ENCODE measurements at regions of chr12 and their contacts with region 1.

Region 1: GRCh38 chr12:114611145-114612018 is 72.6 kb downstream of the TBX3 start:
- DNase-seq: peak; percentile 75 to 82
- H3K4me3 ChIP-seq: no peak overlapping the region
- H3K4me3 Mint-ChIP-seq: peak overlapping the region; percentile 19
- H3K27ac Mint-ChIP-seq: peak overlapping the region; percentile 27
- H3K4me1 ChIP-seq: peaks cover 20% of the 10 kb centered on the region
- H3K4me1 Mint-ChIP-seq: peaks cover 11% of the 10 kb centered on the region
- H3K27me3 ChIP-seq: no peaks in the 10 kb centered on the region
- H3K27me3 Mint-ChIP-seq: no peaks in the 10 kb centered on the region
- CTCF ChIP-seq: no peak

Region 2: DNA sequence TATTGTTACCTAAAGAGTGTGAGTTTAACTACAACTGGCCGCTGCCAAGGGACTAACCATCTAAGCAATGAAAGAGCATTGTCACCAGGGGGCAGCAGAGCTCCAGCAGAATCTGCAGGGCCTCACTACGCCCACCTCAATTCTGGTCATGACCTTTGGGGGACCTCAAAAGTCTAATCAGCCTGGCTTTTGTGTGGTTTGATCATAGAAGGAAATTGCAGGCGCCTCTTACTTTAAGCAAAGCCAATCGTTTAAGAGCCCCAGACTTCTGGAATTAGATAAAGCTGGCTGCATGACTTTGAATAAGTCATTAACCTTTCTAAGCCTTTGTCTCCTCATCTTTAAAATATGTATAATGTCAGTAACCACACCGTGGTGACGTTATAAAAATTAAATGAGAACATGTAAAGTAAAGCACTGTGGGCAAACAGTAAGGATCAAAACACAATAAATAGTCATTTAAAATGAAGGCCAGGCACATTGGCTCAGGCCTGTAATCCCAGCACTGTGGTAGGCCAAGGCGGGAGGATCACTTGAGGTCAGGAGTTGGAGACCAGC is 14.0 kb after region 1 on chr12:
- CTCF ChIA-PET with region 1: interaction called, 16 read pairs
- POLR2A ChIA-PET with region 1: interaction called, 6 read pairs
- intact Hi-C with region 1: no loop called
- DNase-seq: peak; percentile 76 to 81
- H3K4me3 ChIP-seq: no peak overlapping the region
- H3K4me3 Mint-ChIP-seq: no peak overlapping the region
- H3K27ac Mint-ChIP-seq: peak overlapping the region; percentile 61
- H3K4me1 ChIP-seq: peaks cover 30% of the 10 kb centered on the region
- H3K4me1 Mint-ChIP-seq: peaks cover 44% of the 10 kb centered on the region
- H3K27me3 ChIP-seq: no peaks in the 10 kb centered on the region
- H3K27me3 Mint-ChIP-seq: no peaks in the 10 kb centered on the region
- CTCF ChIP-seq: peak; percentile 80 to 84

Region 3: DNA sequence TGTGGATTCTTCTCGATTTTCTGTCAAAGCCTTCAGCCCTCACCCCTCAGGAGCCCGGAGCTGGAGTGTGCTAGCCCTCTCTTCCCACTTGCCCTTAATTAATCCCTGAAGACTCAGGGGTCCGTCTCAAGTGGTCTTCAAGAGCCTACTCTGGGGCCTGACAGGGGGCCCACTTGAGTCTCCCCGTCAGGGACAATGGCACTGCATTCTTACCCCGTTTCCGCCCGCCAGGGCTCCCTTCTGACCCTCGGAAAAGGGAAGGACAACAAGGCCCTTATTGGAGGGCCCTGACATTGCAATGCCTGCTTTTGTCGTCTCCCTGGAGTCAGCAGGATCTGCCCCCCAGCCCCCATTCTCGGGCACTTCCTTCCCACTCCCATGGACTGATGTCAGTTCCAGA is 38.2 kb after region 1 on chr12:
- CTCF ChIA-PET with region 1: no interaction called
- POLR2A ChIA-PET with region 1: no interaction called
- intact Hi-C with region 1: no loop called
- DNase-seq: no peak
- H3K4me3 ChIP-seq: no peak overlapping the region
- H3K4me3 Mint-ChIP-seq: no peak overlapping the region
- H3K27ac Mint-ChIP-seq: no peak overlapping the region
- H3K4me1 ChIP-seq: no peaks in the 10 kb centered on the region
- H3K4me1 Mint-ChIP-seq: no peaks in the 10 kb centered on the region
- H3K27me3 ChIP-seq: no peaks in the 10 kb centered on the region
- H3K27me3 Mint-ChIP-seq: no peaks in the 10 kb centered on the region
- CTCF ChIP-seq: no peak

Region 4: GRCh38 chr12:114918535-114919233 is 307.3 kb after region 1 on chr12:
- CTCF ChIA-PET with region 1: interaction called, 11 read pairs
- POLR2A ChIA-PET with region 1: no interaction called
- intact Hi-C with region 1: no loop called
- DNase-seq: peak; percentile 69 to 79
- H3K4me3 ChIP-seq: no peak overlapping the region
- H3K4me3 Mint-ChIP-seq: no peak overlapping the region
- H3K27ac Mint-ChIP-seq: peak overlapping the region; percentile 74
- H3K4me1 ChIP-seq: peaks cover 28% of the 10 kb centered on the region
- H3K4me1 Mint-ChIP-seq: peaks cover 12% of the 10 kb centered on the region
- H3K27me3 ChIP-seq: no peaks in the 10 kb centered on the region
- H3K27me3 Mint-ChIP-seq: no peaks in the 10 kb centered on the region
- CTCF ChIP-seq: no peak